ENCODE measurements at regions of chrX and their contacts with region 1.

Region 1: DNA sequence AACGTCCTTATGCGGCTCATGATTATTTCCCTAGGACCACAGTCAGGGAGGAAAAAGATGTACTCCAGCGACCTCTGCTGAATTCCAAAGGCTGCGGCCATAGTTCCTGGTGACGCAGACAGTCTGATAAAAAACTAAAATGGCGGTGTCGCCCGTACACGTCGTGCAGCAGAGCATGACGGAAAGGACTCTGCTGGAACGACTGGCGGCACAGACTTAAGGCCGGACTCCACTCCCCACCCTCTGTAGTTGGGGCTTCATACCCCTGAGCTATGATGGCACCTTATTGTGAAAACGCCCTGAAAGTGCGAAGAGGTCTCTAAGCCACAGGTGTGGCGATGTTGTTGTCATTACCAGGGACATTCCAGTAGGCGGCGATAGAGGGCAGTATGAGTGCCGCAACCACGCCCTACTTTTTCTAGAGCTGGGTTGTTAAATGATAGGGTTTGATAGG is 90.0 kb upstream of the EDA2R start:
- DNase-seq: peak; percentile 64
- H3K4me3 Mint-ChIP-seq: peak overlapping the region; percentile 87
- H3K27ac Mint-ChIP-seq: peak overlapping the region; percentile 92
- H3K4me1 Mint-ChIP-seq: peaks cover 2% of the 10 kb centered on the region
- H3K27me3 Mint-ChIP-seq: no peaks in the 10 kb centered on the region

Region 2: DNA sequence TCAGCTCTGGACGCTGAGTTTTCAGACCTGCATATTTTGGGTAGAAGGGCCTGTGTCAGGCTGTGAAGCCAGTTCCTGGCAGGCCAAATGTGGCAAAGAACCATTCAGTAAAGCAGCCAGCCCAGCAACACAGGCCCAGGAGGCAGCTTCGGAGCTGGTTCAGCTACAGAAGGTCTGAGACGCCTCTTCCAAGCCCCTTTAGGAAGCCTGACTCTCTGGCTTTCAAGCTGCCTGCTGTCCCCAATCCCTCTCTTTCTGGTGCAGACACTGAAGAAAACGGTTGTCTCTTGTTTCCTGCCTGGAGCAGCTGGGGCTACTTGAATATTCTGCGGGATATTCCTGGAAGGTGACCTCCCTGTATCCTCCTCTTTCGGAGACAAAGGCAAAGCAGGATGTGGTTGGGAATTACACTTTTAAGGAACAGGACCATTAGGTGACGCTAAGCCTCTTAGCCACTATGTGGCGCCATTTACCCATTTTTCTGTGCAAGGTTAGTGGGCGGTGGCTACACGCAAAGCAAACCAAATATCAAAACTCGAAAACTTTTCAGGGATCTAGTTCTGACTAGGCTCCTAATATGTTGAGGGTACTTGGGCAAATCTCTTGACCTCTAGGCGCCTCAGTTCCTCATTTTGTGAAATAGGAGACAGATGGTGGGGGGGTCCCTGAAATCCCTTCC is 1147.0 kb before region 1 on chrX:
- CTCF ChIA-PET with region 1: interaction called, 4 read pairs
- intact Hi-C with region 1: loop called (anchors 1 kb)
- DNase-seq: peak; percentile 69
- H3K4me3 Mint-ChIP-seq: no peak overlapping the region
- H3K27ac Mint-ChIP-seq: no peak overlapping the region
- H3K4me1 Mint-ChIP-seq: peaks cover 6% of the 10 kb centered on the region
- H3K27me3 Mint-ChIP-seq: no peaks in the 10 kb centered on the region

Region 3: DNA sequence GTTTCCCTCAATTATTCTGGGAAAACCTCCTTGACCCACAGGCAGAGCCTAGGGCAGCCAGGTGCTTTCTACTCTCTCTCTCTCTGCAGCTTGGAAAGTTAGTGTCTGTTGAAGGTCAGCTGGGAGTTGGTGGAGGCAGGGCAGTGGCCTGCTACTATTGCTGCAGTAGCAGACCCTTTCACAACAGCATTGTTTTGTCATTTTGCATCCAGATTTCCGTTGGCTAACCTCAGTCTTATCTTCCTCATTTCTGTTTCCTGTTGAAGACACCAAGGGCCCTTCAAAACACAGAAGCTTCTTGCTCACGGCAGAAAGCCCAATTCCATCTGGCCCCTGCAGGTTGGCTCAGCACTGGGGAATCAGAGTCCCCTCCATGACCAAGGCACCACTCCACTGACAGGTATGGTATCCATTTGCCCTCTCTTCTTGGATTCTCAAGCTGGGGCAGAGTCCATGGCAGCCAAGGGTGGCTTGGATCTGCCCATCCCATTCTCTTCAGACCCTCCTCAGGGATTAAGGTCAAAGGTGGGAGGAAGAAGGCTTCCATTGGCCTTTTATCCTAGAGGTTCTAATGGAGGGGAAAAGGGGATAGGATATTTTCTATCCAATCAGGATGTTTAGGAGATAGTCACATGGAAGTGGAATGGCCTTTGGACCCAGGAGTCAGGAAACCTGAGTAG is 713.6 kb before region 1 on chrX:
- CTCF ChIA-PET with region 1: no interaction called
- intact Hi-C with region 1: loop called (anchors 10 kb)
- DNase-seq: no peak
- H3K4me3 Mint-ChIP-seq: no peak overlapping the region
- H3K27ac Mint-ChIP-seq: no peak overlapping the region
- H3K4me1 Mint-ChIP-seq: peaks cover 58% of the 10 kb centered on the region
- H3K27me3 Mint-ChIP-seq: no peaks in the 10 kb centered on the region

Region 4: DNA sequence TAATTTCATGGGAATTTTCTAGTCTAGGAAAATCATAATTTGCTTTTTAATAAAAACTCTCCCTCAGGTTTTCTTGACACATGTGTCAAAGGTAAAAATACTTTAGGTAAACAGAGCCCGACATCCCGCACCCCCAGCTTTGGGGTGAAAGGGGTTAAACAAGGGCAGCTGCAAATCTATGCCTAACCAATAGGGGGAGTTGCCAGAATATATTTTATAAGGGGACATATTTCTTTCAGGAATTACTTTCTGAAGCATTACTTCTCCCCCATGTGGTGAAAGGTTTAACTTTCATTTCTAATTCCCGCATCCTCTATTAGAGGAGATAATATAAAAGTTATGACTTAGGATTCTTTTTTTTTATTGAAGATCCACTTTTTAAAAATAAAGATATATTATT is 618.7 kb before region 1 on chrX:
- CTCF ChIA-PET with region 1: no interaction called
- intact Hi-C with region 1: loop called (anchors 10 kb)
- DNase-seq: peak; percentile 8
- H3K4me3 Mint-ChIP-seq: no peak overlapping the region
- H3K27ac Mint-ChIP-seq: no peak overlapping the region
- H3K4me1 Mint-ChIP-seq: peaks cover 7% of the 10 kb centered on the region
- H3K27me3 Mint-ChIP-seq: no peaks in the 10 kb centered on the region

Region 5: GRCh38 chrX:66255359-66255967 is 473.4 kb before region 1 on chrX:
- CTCF ChIA-PET with region 1: no interaction called
- intact Hi-C with region 1: no loop called
- DNase-seq: no peak
- H3K4me3 Mint-ChIP-seq: no peak overlapping the region
- H3K27ac Mint-ChIP-seq: no peak overlapping the region
- H3K4me1 Mint-ChIP-seq: no peaks in the 10 kb centered on the region
- H3K27me3 Mint-ChIP-seq: no peaks in the 10 kb centered on the region

Region 6: GRCh38 chrX:66638591-66639500 is 90.0 kb before region 1 on chrX and contains the start of gene EDA2R:
- CTCF ChIA-PET with region 1: interaction called, 5 read pairs
- intact Hi-C with region 1: loop called (anchors 1 kb)
- DNase-seq: peak; percentile 66
- H3K4me3 Mint-ChIP-seq: peak within 1 kb of the TSS; percentile 85
- H3K27ac Mint-ChIP-seq: peak within 1 kb of the TSS; percentile 65
- H3K4me1 Mint-ChIP-seq: peaks cover 4% of the 10 kb centered on the region
- H3K27me3 Mint-ChIP-seq: no peaks in the 10 kb centered on the region
- total RNA-seq, gene EDA2R: 5.8 TPM

Measured in activated naive CD4-positive, alpha-beta T cell treated with anti-CD3 and anti-CD28 coated beads for 36 hours (primary cell).